ENCODE measurements at regions of chr11 and their contacts with region 1.

Region 1: DNA sequence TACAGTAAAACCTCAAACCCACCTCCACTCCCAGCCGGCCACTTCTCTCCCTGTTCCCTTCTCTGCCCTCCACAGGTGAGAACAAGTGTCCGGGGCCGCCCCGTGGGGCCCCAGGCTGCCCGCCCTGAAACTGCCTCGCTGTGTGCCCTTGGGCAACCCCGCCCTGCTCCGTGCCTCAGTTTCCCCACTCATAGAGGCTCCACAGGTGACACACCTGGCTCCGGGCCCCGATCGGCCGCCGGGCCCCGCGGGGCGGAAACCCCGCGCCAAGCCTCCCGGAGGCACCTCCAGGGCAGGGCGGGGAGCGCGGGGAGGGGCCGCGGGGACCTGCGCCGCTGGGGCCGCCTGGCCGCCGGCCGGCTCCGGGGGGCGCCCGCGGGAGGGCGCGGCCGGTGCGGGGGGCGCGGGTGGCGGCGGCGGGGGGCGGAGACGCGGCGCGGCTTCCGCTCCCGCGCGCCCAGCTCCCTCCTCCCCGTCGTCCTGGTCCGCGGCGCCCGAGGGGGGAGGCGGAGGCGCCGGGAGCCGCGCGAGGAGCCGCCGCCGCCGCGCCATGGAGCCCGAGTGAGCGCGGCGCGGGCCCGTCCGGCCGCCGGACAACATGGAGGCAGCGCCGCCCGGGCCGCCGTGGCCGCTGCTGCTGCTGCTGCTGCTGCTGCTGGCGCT is at the start of gene LRP5:
- DNase-seq: no peak
- total RNA-seq, gene LRP5: 38.6 TPM

Region 2: GRCh38 chr11:68271781-68272608 is 40.3 kb before region 1 on chr11 and contains the start of gene C11orf24:
- intact Hi-C with region 1: loop called (anchors 5 kb)
- DNase-seq: peak; percentile 99
- total RNA-seq, gene C11orf24: 45.2 TPM

Region 3: DNA sequence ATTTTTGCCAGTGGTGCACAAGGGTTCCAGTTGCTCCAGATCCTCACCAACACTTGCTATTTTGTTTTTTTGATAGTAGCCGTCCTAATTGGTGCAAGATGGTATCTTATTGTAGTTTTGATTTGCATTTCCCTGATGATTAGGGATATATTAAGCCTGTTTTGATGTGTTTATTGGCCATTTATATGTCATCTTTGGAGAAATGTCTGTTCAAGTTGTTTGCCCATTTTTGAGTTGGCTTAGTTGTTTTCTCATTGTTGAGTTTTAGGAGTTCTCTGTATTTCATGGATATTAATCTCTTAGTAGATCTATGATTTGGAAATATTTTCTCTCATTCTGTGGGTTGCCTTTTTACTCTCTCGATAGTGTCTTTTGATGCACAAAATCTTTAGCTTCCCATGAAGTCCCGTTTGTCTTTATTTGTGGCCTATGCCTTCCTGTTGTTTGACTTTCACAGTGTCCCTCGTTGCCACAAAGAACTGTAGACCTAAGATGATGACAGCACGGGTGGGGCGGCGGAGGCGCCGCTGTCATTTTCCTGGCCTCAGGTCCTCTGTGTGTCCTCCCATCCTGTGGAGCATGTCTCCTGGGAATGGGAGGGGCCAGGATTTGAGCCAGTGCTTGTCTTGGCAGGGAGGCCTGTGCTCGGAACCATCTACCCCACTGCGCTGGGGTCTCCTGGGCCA is 33.7 kb after region 1 on chr11:
- intact Hi-C with region 1: loop called (anchors 2 kb)
- DNase-seq: peak; percentile 85

Region 4: GRCh38 chr11:68363771-68364170 is 51.5 kb after region 1 on chr11:
- intact Hi-C with region 1: no loop called
- DNase-seq: no peak

Region 5: DNA sequence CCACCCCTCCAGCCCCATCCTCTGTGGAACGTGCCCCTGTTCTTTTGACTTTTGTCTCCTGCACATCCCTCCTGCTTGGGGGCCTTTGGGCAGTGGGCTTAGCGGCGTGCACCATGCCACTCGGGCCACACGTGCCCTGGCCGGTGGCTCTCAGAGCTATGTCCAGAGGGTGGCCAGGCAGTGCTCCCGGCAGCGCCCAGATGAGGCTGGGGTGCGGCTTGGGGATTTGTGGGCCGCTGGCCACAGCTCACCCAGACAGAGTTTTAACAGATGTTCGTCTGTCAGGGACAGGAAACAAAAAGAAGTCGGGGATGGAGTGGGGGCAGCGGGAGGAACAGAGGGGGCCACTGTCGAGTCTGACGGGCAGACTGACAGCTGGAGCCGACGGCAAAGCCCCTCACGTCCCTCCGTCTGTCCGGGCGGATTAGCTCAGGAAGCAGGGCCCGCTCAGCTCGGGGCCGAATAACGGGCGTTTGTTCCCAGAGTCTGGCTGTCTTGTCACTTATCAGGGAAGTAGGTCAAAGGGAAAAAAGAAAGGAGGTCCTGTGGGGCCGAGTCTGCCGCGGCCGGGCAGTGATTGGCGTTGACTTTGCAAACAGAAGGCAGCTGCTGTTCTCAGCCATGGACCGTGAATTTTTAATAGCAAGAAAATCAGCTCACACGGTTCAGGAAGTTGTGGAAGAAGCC is 61.7 kb after region 1 on chr11:
- intact Hi-C with region 1: loop called (anchors 2 kb)
- DNase-seq: no peak